ENCODE measurements at regions of chr3 and their contacts with region 1.

Region 1: GRCh38 chr3:125107861-125108567 is 52.2 kb upstream of the HEG1 start:
- DNase-seq: peak; percentile 71
- CTCF ChIP-seq: no peak

Region 2: GRCh38 chr3:124818398-124819091 is 289.5 kb before region 1 on chr3:
- CTCF ChIA-PET with region 1: no interaction called
- POLR2A ChIA-PET with region 1: no interaction called
- DNase-seq: no peak
- CTCF ChIP-seq: no peak

Region 3: GRCh38 chr3:124845406-124845805 is 262.6 kb before region 1 on chr3:
- CTCF ChIA-PET with region 1: no interaction called
- POLR2A ChIA-PET with region 1: no interaction called
- DNase-seq: no peak
- CTCF ChIP-seq: no peak

Region 4: DNA sequence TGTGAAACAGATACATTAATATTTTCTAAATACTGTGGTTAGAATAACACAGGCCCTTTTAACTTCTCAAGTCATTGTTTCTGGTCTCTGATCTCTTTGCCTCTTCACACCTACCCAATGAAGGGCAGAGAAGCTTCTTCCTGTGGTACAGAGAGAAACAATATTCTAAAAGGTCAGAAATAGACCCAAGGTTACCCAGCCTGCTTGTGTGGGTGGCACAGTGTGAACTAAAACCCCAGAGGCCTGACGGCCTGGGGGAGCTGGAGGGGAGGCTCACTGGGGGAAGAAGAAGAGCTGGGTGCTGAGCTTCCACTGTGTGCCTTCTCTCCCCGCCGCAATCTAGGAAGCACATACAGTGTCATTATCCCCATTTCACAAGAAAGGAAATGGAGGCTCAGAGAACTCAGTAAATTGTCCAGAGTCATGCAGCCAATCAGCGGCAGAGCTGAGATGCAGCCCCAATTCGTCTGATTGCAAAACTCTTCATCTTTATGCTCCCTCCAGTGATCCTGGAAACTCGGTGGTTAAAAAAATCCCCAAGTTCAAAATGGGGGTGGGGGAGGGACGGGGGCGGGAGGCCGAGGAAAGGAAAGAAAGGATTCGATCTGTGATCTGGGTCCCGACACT is 11.9 kb after region 1 on chr3:
- CTCF ChIA-PET with region 1: interaction called, 39 read pairs
- POLR2A ChIA-PET with region 1: no interaction called
- DNase-seq: peak; percentile 66
- CTCF ChIP-seq: no peak

Region 5: GRCh38 chr3:125129512-125129962 is 21.5 kb after region 1 on chr3:
- CTCF ChIA-PET with region 1: interaction called, 18 read pairs
- POLR2A ChIA-PET with region 1: no interaction called
- DNase-seq: no peak
- CTCF ChIP-seq: no peak